Activated B cell treated with CpG ODN at 0.5 μM for 24 hours (primary cell): ENCODE measurements at regions of chr10 and their contacts with region 1.

Region 1: DNA sequence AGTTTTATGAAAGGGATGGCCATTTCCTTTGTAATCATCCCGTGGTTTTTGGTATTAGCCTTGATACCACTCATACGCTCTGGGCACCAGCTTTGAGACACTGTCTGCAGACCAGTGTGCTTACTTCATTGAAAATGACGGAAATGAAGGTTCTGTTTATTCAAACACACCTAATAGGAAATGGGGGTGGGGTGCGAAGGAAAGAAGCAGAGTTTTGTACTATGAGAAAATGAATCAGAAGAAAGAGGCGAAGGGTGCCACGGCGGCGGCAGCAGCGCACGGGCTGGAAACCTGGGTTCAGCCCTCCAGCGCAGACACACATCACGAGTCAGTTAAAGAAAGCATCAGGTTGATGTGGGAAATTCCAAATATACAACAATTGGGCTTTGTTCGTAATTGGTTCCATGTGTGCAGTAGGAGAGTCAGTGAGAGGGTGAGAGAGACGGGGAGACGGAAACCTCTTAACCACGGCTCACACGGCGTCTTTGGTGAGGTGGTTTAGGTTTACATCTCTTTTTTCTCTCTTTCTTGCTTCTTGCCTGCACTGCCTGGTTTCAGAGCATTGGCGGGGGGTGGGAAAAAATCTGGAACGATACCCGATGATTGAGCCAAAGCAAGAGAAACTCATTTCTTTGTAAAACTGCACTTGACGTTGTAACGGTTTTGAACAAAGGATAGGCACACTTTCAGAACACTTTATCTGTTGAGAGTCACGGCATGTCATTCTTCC is 321.2 kb downstream of the FRMD4A start:
- DNase-seq: no peak
- ATAC-seq: peak; percentile 60
- H3K4me3 Mint-ChIP-seq: peak overlapping the region; percentile 74
- H3K27ac Mint-ChIP-seq: peak overlapping the region; percentile 54
- H3K4me1 Mint-ChIP-seq: peaks cover 32% of the 10 kb centered on the region
- H3K27me3 Mint-ChIP-seq: peaks cover 16% of the 10 kb centered on the region
- CTCF ChIP-seq: no peak

Region 2: GRCh38 chr10:13195016-13195415 is 814.5 kb before region 1 on chr10:
- CTCF ChIA-PET with region 1: no interaction called
- POLR2A ChIA-PET with region 1: no interaction called
- intact Hi-C with region 1: no loop called
- DNase-seq: no peak
- ATAC-seq: no peak
- H3K4me3 Mint-ChIP-seq: no peak overlapping the region
- H3K27ac Mint-ChIP-seq: no peak overlapping the region
- H3K4me1 Mint-ChIP-seq: no peaks in the 10 kb centered on the region
- H3K27me3 Mint-ChIP-seq: no peaks in the 10 kb centered on the region
- CTCF ChIP-seq: no peak

Region 3: DNA sequence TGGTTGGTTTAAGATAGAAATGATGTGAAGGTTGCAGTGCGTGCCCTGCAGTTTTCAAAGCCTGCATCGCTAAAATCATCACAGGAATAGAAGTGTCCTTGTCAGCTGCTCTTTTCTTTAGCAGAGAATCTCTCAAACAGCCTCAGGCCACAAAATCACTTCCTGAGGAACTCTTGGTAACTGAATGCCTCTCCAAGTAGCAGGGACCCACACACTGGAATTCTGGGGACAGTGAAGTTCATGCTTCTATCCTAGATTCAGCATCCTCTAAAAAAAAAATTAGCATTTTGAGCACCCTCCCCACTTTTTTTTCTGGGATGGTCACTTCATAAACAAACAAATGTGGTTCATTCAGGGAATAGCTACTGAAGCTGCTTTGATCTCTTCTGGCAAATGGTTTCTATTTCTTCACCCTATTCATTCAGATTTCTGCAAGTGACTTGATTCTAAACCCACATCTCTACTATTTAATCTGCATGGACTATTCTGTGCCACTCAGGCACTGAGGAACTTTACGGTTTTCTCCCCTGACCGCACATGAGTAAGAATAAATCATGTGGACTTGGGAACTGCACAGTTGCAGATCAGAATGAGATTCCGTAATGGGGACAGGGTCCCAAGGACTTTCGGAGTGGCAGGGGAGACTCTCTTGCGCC is 14.3 kb after region 1 on chr10:
- CTCF ChIA-PET with region 1: no interaction called
- POLR2A ChIA-PET with region 1: interaction called, 4 read pairs
- intact Hi-C with region 1: loop called (anchors 2 kb)
- DNase-seq: no peak
- ATAC-seq: no peak
- H3K4me3 Mint-ChIP-seq: peak overlapping the region; percentile 79
- H3K27ac Mint-ChIP-seq: no peak overlapping the region
- H3K4me1 Mint-ChIP-seq: peaks cover 36% of the 10 kb centered on the region
- H3K27me3 Mint-ChIP-seq: peaks cover 9% of the 10 kb centered on the region
- CTCF ChIP-seq: no peak

Region 4: DNA sequence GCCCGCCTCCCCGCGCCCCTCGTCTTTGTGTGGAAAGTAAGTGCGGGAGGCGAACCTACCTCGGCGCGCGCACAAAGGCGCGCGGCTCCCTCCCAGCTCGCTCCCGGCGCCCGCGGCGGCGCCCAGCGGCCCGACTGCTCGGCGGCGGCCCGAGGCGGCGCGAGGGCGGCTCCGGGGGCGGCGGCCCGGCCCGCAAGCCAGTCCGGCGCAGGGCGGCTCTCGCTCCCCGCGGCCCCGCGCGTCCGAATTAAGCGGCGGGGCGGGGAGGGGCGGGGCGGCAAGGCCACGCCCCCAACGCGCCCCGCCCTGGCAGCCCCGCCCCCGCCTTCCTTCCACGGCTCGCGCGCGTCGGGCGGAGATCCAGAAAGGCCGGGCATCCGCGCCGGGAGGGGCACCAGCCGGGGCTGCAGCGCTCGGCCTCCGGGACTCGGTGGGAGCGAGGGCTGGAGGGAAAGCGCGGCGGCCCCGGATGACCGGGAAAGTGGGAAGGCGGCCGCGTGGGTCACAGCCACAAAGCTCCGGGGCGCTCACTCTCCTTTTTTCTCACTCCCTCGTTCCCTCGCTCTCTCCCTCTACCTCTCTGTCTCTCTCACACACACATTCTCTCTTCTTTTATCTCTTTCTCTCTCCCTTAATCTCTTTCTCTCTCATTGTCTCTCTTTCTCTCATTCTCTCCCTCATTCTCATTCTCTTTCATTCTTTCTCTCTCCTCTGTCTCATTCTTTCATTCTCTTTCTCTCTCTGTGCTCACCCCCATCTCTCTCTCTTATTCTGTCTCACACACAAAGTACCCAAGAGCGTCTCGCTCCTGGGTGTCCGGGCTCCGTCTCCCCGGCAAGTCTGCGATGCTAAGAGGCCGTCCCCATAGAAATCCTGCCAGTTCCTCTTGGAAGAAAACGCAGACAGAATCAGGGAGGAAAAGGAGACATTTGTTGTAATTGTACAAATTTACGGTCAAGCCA is 594.9 kb after region 1 on chr10:
- CTCF ChIA-PET with region 1: no interaction called
- POLR2A ChIA-PET with region 1: no interaction called
- intact Hi-C with region 1: no loop called
- DNase-seq: peak; percentile 72
- ATAC-seq: peak; percentile 55
- H3K4me3 Mint-ChIP-seq: peak overlapping the region; percentile 86
- H3K27ac Mint-ChIP-seq: peak overlapping the region; percentile 94
- H3K4me1 Mint-ChIP-seq: peaks cover 68% of the 10 kb centered on the region
- H3K27me3 Mint-ChIP-seq: no peaks in the 10 kb centered on the region
- CTCF ChIP-seq: no peak